IMR-90 (cell line): ENCODE measurements at regions of chr14 and their contacts with region 1.

Region 1: GRCh38 chr14:65102441-65103149 is at the start of gene MAX:
- DNase-seq: peak; percentile 98
- ATAC-seq: peak; percentile 89
- H3K4me3 ChIP-seq: peak within 1 kb of the TSS; percentile 84
- H3K27ac ChIP-seq: peak within 1 kb of the TSS; percentile 78
- H3K4me1 ChIP-seq: no peaks in the 10 kb centered on the region
- H3K27me3 ChIP-seq: no peaks in the 10 kb centered on the region
- CTCF ChIP-seq: no peak
- POLR2A ChIP-seq: peak; percentile 76; the same call in 1 of the 2 replicates
- RAD21 ChIP-seq: no peak
- total RNA-seq, gene MAX: 35.3 and 45.2 TPM in 2 replicates

Region 2: DNA sequence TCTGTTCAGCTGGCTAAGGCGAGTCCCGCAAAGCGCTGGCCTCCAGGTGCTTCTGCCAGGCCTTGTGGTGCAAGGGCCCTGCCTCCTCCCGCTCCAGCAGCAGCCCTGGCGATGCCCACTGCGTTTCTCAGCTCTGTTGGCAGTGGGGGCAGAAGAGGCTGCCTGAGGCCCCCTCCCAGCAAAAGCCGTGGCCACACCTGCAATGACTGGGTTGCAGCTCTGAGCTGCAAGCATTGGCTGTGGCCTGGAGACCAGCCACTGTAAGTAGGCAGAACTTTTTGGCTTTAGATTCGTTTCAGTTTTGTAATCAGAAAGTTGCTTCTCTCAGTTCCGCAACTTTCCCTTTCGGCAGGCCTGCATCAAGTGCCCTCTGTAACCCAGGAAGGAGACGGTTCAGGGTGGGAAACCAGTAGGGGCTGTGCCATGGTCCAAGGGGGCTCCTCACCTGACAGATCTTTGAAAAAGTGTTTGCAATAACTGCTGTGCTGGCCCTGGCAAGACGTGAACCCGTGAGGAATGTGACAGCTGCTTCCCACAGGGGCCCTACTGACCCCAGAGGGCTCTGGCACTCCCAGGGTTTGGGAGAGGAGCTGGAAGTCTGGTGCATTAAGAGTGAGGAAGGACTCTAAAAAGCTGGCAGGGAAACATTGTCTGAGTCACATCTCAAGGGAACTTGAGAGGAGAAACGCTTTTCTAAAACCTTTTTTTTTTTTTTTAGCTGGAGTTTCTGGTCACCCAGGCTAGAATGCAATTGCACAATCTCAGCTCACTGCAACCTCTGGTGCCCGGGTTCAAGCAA is 54.2 kb after region 1 on chr14:
- CTCF ChIA-PET with region 1: no interaction called
- POLR2A ChIA-PET with region 1: no interaction called
- dilution Hi-C with region 1: no loop called
- in situ Hi-C with region 1: no loop called
- intact Hi-C with region 1: loop called (anchors 5 kb)
- DNase-seq: peak; percentile 78
- ATAC-seq: peak; percentile 91
- H3K4me3 ChIP-seq: no peak overlapping the region
- H3K27ac ChIP-seq: peak overlapping the region; percentile 30; the same call in 1 of the 2 replicates
- H3K4me1 ChIP-seq: peaks cover 6% of the 10 kb centered on the region
- H3K27me3 ChIP-seq: no peaks in the 10 kb centered on the region; the same call in 1 of the 2 replicates
- CTCF ChIP-seq: no peak
- POLR2A ChIP-seq: no peak
- RAD21 ChIP-seq: no peak

Region 3: GRCh38 chr14:65287264-65288131 is 184.9 kb after region 1 on chr14:
- CTCF ChIA-PET with region 1: no interaction called
- POLR2A ChIA-PET with region 1: interaction called, 30 read pairs
- dilution Hi-C with region 1: no loop called
- in situ Hi-C with region 1: no loop called
- intact Hi-C with region 1: no loop called
- DNase-seq: no peak
- ATAC-seq: no peak
- H3K4me3 ChIP-seq: no peak overlapping the region
- H3K27ac ChIP-seq: no peak overlapping the region
- H3K4me1 ChIP-seq: peaks cover 3% of the 10 kb centered on the region
- H3K27me3 ChIP-seq: no peaks in the 10 kb centered on the region
- CTCF ChIP-seq: no peak
- POLR2A ChIP-seq: no peak
- RAD21 ChIP-seq: no peak